Aorta (tissue), 5 donors: ENCODE measurements at regions of chr3 and their contacts with region 1.

Region 1: DNA sequence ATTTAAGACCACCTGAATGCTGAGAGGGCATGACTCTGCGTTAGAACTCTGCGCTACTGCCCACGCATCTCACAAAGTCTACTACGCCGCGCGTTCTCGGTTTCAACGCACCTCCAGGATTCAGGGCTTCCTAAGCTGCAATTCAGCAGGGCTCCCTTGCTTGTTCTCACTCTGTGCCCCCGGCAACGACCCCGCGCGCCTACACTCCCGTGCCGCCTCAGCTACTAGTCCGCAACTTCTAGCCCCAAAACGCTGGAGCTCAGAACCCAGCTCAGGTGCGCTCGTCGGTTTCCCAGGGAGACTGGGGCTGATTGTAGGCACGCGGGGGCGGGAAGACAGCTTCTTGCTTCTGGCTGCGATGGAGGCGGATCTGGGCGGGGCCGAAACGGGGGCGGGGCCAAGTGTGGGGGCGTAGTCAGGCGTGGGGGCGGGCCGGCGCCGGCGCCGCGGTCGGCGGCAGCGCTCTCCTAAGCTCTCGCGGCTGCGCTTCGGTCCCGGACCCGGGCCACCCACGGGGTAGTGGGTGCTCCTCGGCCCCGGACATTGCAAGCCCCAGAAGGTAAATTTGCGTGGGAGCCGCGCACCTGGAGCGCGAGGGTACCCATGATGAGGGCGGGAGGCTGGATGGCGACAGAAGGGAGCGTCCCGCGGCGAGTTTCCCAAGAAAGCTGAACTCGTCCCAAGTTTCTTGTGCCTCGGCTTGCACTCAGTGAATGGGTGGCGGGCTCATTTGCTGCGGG is at the start of gene ARHGEF26:
- DNase-seq: peak; percentile 91 to 97
- ATAC-seq: peak; percentile 95
- H3K4me3 ChIP-seq: peak within 1 kb of the TSS; percentile 59 to 80
- H3K27ac ChIP-seq: peak within 1 kb of the TSS in 1 of 2 donors; percentile 18
- H3K4me1 ChIP-seq: no peaks in the 10 kb centered on the region
- H3K27me3 ChIP-seq: no peaks in the 10 kb centered on the region
- total RNA-seq, gene ARHGEF26: 16.4 to 26.9 TPM

Region 2: DNA sequence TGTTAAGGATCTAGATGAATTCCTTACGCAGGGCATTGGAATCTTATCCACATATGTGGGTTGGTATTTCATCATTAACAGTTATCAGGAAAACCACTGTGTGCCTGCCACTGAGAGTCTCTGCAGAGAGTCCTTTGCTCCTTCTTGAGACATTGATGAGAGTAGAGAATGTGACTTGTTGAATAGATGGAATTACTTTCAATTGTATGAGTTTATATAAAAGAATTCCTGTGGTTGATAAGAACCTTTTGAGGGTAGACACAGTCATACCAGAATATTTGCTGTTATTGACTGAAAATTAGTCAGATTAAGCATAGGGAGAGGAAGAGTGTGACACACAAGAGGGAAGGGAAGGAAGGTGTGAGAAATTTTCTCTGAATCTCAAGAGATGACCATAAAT is 30.8 kb after region 1 on chr3:
- intact Hi-C with region 1: no loop called
- DNase-seq: no peak
- ATAC-seq: no peak
- H3K4me3 ChIP-seq: no peak overlapping the region
- H3K27ac ChIP-seq: no peak overlapping the region
- H3K4me1 ChIP-seq: no peaks in the 10 kb centered on the region
- H3K27me3 ChIP-seq: no peaks in the 10 kb centered on the region

Region 3: GRCh38 chr3:154168998-154169795 is 48.1 kb after region 1 on chr3:
- intact Hi-C with region 1: no loop called
- DNase-seq: no peak
- ATAC-seq: no peak
- H3K4me3 ChIP-seq: no peak overlapping the region
- H3K27ac ChIP-seq: no peak overlapping the region
- H3K4me1 ChIP-seq: peaks cover 2 to 8% of the 10 kb centered on the region in 2 donors
- H3K27me3 ChIP-seq: no peaks in the 10 kb centered on the region

Region 4: GRCh38 chr3:154180836-154181731 is 60.0 kb after region 1 on chr3:
- intact Hi-C with region 1: loop called in 1 of 2 experiments (anchors 5 kb)
- DNase-seq: no peak
- ATAC-seq: no peak
- H3K4me3 ChIP-seq: peak overlapping the region in 1 of 2 donors; percentile 26
- H3K27ac ChIP-seq: peak overlapping the region; percentile 85 to 98
- H3K4me1 ChIP-seq: peaks cover 3 to 9% of the 10 kb centered on the region in 2 donors
- H3K27me3 ChIP-seq: no peaks in the 10 kb centered on the region

Region 5: DNA sequence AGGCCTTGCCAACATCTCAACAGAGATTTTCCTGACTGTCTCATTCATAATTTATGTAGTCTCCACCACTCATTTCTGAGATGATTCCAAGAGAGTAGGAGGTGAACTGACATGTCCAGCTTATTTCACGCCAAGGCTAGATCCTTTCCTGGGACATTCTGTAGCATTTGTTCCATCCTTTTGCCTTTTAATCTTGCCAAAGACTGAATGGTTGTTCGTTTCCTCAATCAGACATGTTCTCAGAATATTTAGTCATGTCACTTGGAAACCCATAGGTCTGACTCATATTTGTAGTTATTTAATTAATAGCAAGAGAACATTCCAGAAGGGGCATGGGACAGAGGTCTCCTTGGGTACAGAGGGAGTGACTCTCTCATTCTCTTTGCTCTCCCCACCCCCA is 122.2 kb after region 1 on chr3:
- intact Hi-C with region 1: loop called in 1 of 2 experiments (anchors 5 kb)
- DNase-seq: no peak
- ATAC-seq: peak; percentile 73
- H3K4me3 ChIP-seq: no peak overlapping the region
- H3K27ac ChIP-seq: peak overlapping the region; percentile 32 to 98
- H3K4me1 ChIP-seq: peaks cover 2 to 15% of the 10 kb centered on the region in 2 donors
- H3K27me3 ChIP-seq: no peaks in the 10 kb centered on the region

Region 6: DNA sequence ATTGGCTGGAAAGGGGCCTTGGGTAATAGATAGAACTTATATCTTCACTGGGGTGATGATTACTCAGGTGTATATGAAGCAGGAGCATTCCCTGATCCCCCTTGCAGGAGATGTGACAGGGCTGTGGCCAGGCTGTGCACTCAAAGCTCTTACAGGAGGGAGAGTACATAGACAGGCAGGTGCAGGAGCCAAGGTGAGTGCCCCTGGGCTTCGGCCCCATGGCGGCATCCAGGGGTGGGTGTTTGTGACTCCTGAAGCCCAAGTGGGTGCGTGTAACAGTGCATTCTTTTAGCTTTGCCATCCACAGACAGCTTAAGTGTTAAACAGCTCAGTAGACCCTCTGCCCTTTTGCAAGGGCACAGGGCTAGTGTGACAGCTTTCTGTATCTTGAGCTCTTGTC is 545.4 kb after region 1 on chr3:
- intact Hi-C with region 1: no loop called
- DNase-seq: no peak
- ATAC-seq: no peak
- H3K4me3 ChIP-seq: no peak overlapping the region
- H3K27ac ChIP-seq: no peak overlapping the region
- H3K4me1 ChIP-seq: no peaks in the 10 kb centered on the region
- H3K27me3 ChIP-seq: no peaks in the 10 kb centered on the region